ENCODE measurements at regions of chr5 and their contacts with region 1.

Region 1: GRCh38 chr5:53008751-53009150 is 19.6 kb downstream of the ITGA2 start:
- DNase-seq: peak; percentile 73
- H3K4me3 Mint-ChIP-seq: no peak overlapping the region
- H3K27ac Mint-ChIP-seq: peak overlapping the region; percentile 55
- H3K4me1 Mint-ChIP-seq: peaks cover 61% of the 10 kb centered on the region
- H3K27me3 Mint-ChIP-seq: peaks cover 4% of the 10 kb centered on the region

Region 2: DNA sequence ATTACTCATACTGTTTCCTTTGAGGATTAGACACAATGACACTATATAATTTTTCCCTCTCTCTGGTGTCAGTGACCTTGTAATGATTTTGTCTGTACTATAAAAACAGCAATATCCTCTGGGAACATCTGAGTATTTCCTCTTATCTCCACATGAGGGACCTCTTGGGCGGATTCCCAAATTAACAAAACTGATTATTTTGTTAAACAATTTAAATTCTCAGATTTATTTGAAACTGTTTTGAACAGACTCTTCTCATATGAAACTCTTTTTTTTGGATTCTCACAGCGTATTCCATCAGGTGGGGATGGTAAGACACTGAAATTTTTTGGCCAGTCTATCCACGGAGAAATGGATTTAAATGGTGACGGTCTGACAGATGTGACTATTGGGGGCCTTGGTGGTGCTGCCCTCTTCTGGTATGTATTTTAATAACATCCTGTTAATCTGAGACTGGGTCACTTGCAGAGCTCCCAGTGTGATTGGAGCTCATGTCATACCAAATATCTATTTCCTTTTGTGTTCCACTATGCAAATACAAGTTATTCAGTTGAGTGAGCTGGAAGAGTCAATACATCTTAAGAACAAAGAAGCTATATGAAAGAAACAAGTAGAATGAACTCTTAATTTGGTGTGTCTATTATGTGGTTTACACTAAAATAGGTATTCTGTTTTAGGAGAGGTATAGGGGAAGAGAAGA is 93.4 kb before region 1 on chr5:
- CTCF ChIA-PET with region 1: no interaction called
- POLR2A ChIA-PET with region 1: no interaction called
- intact Hi-C with region 1: no loop called
- DNase-seq: peak; percentile 52
- H3K4me3 Mint-ChIP-seq: peak overlapping the region; percentile 36
- H3K27ac Mint-ChIP-seq: no peak overlapping the region
- H3K4me1 Mint-ChIP-seq: peaks cover 6% of the 10 kb centered on the region
- H3K27me3 Mint-ChIP-seq: no peaks in the 10 kb centered on the region

Region 3: DNA sequence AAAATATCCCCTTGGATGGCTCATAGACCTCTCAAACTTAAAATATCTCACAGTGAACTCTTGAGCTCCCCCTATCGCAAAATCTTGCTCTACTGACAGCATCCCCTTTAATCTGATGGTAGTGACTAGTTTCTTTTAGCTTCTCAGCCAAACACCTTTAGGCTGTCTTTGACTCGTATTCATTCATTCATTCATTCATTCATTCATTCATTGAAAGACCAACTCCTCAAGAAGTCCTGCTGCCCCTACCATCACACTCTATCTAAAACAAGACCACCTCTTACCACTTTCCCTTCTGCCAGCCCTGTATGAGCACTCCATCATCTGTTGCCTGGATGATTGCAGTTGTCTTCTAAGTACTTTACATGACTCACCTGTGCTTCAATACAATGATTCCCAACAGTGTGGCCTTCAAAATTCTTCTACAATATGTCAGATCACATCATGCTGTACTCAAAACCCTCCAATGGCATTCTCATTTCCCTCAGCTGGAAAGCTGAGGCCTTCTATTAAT is 27.2 kb after region 1 on chr5:
- CTCF ChIA-PET with region 1: interaction called, 6 read pairs
- POLR2A ChIA-PET with region 1: interaction called, 4 read pairs
- intact Hi-C with region 1: loop called (anchors 1 kb)
- DNase-seq: no peak
- H3K4me3 Mint-ChIP-seq: no peak overlapping the region
- H3K27ac Mint-ChIP-seq: no peak overlapping the region
- H3K4me1 Mint-ChIP-seq: peaks cover 38% of the 10 kb centered on the region
- H3K27me3 Mint-ChIP-seq: peaks cover 5% of the 10 kb centered on the region

Region 4: GRCh38 chr5:53069626-53070025 is 60.9 kb after region 1 on chr5:
- CTCF ChIA-PET with region 1: no interaction called
- POLR2A ChIA-PET with region 1: no interaction called
- intact Hi-C with region 1: loop called (anchors 1 kb)
- DNase-seq: peak; percentile 86
- H3K4me3 Mint-ChIP-seq: no peak overlapping the region
- H3K27ac Mint-ChIP-seq: peak overlapping the region; percentile 10
- H3K4me1 Mint-ChIP-seq: peaks cover 18% of the 10 kb centered on the region
- H3K27me3 Mint-ChIP-seq: peaks cover 7% of the 10 kb centered on the region

Region 5: GRCh38 chr5:53109443-53110127 is 100.8 kb after region 1 on chr5 and contains the start of gene MOCS2:
- CTCF ChIA-PET with region 1: no interaction called
- POLR2A ChIA-PET with region 1: no interaction called
- intact Hi-C with region 1: loop called (anchors 1 kb)
- DNase-seq: peak; percentile 93
- H3K4me3 Mint-ChIP-seq: peak within 1 kb of the TSS; percentile 94
- H3K27ac Mint-ChIP-seq: peak within 1 kb of the TSS; percentile 78
- H3K4me1 Mint-ChIP-seq: peaks cover 42% of the 10 kb centered on the region
- H3K27me3 Mint-ChIP-seq: no peaks in the 10 kb centered on the region
- total RNA-seq, gene MOCS2: 20.7 to 21.6 TPM